Common myeloid progenitor, CD34-positive (primary cell): ENCODE measurements at regions of chr6 and their contacts with region 1.

Region 1: DNA sequence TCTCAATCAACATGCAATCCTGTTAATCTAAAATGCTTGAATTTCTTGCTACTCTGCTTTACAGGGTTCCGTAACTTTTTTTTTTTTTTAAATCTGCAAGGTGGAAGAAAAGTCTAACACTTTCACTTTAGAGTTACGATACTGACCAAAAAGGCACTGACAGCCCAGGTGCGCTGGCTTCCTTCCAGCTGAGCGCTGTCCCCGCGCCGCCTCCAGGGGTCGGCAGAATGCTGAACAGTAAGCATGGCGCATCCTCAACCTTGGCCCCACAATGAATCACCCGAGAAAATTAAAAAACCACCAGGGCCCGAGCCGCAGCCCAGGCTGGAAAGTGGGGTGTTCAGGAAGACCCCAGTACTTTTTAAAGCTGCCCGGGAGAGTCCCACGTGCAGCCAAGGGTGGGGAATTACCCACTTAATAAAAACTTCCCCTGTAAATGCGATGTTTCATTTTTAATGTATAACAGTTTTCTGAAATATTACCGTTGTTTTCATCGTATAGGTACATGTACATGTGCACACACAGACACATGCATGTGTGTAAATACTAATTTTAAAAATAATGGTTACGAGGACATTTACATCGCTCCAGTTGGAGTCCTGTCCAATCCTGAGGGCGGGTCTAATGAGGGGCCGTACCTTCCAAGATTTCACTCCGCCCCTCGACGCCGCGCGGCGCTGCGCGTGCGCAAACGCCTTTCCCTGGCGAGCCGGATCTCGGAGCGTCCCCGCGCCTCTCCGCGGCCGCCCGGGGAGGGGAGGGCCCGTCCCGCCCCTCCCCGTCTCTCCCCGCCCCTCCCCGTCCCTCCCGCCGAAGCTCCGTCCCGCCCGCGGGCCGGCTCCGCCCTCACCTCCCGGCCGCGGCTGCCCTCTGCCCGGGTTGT is at the start of gene GINM1:
- DNase-seq: peak; percentile 91 to 96 (median 94)
- H3K4me3 ChIP-seq: peak within 1 kb of the TSS; percentile 87 to 98 (median 92)
- H3K27ac ChIP-seq: peak within 1 kb of the TSS; percentile 40 to 84
- H3K4me1 ChIP-seq: peaks cover 5 to 16% (median 8%) of the 10 kb centered on the region in 4 experiments
- H3K27me3 ChIP-seq: no peaks in the 10 kb centered on the region

Region 2: DNA sequence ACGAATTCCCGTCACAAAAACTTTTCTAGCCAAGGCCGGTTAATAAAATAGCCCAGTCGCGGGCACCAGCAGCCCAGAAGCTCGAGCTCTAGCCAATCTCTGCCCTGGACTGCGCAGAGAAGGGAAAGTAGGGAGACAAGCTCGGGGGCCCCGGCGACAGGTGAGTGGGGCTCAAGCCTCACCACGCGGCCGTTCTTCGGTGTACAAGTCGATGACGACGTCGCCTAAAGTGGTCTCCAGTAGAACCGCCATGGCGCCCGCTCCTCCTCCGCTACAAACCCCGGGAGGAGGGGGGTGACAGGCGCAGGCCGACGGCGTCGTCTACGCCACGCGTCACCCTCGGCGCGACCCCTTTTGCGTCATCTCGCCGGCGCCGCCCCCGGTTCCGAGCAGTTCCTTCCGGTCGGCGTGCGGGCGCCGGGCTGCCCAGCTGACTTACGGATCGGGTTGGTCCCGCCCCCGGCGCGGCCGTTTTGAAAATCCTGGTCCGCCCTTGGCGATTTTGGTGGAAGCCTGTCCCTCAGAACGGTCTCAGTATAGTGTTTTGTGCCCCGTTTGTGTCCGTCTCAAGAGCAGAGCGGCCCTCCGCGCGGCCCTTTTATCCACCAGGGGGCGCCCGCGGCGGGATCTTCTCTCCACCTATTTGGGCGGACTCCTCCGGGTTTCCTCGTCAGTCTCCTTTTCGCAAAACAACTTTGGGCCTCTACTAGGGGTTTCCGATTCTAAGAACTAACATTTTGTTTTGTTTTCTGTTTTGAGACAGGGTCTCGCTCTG is 19.8 kb before region 1 on chr6 and contains the start of gene PPIL4:
- CTCF ChIA-PET with region 1: interaction called, 92 read pairs
- POLR2A ChIA-PET with region 1: interaction called, 4 read pairs
- DNase-seq: peak; percentile 97 to 98 (median 98)
- H3K4me3 ChIP-seq: peak within 1 kb of the TSS; percentile 76 to 100 (median 94)
- H3K27ac ChIP-seq: peak within 1 kb of the TSS; percentile 100
- H3K4me1 ChIP-seq: peaks cover 12 to 27% (median 17%) of the 10 kb centered on the region in 4 experiments
- H3K27me3 ChIP-seq: peaks cover 0 to 6% (median 0%) of the 10 kb centered on the region in 5 experiments